ENCODE measurements at regions of chr6 and their contacts with region 1.

Region 1: GRCh38 chr6:6749702-6750491 is 161.4 kb downstream of the LY86 start:
- DNase-seq: peak; percentile 86 to 93 (median 90)
- H3K4me3 ChIP-seq: peak overlapping the region in 2 of 3 experiments; percentile 26 to 69
- H3K4me3 Mint-ChIP-seq: peak overlapping the region; percentile 84 to 90
- H3K27ac ChIP-seq: peak overlapping the region; percentile 89 to 97
- H3K27ac Mint-ChIP-seq: peak overlapping the region; percentile 87 to 99 (median 98)
- H3K4me1 ChIP-seq: peaks cover 57% of the 10 kb centered on the region in 2 donors
- H3K4me1 Mint-ChIP-seq: peaks cover 57% of the 10 kb centered on the region
- H3K27me3 ChIP-seq: no peaks in the 10 kb centered on the region
- H3K27me3 Mint-ChIP-seq: peaks cover 0 to 2% (median 0%) of the 10 kb centered on the region in 3 donors
- CTCF ChIP-seq: no peak

Region 2: GRCh38 chr6:6696867-6697531 is 52.9 kb before region 1 on chr6:
- intact Hi-C with region 1: loop called in 1 of 2 experiments (anchors 10 kb)
- DNase-seq: peak; percentile 66 to 84 (median 81)
- H3K4me3 ChIP-seq: no peak overlapping the region
- H3K4me3 Mint-ChIP-seq: no peak overlapping the region
- H3K27ac ChIP-seq: peak overlapping the region; percentile 1 to 81
- H3K27ac Mint-ChIP-seq: peak overlapping the region; percentile 33 to 91 (median 78)
- H3K4me1 ChIP-seq: peaks cover 74 to 85% of the 10 kb centered on the region in 2 donors
- H3K4me1 Mint-ChIP-seq: peaks cover 78% of the 10 kb centered on the region
- H3K27me3 ChIP-seq: no peaks in the 10 kb centered on the region
- H3K27me3 Mint-ChIP-seq: no peaks in the 10 kb centered on the region
- CTCF ChIP-seq: peak; percentile 80

Region 3: DNA sequence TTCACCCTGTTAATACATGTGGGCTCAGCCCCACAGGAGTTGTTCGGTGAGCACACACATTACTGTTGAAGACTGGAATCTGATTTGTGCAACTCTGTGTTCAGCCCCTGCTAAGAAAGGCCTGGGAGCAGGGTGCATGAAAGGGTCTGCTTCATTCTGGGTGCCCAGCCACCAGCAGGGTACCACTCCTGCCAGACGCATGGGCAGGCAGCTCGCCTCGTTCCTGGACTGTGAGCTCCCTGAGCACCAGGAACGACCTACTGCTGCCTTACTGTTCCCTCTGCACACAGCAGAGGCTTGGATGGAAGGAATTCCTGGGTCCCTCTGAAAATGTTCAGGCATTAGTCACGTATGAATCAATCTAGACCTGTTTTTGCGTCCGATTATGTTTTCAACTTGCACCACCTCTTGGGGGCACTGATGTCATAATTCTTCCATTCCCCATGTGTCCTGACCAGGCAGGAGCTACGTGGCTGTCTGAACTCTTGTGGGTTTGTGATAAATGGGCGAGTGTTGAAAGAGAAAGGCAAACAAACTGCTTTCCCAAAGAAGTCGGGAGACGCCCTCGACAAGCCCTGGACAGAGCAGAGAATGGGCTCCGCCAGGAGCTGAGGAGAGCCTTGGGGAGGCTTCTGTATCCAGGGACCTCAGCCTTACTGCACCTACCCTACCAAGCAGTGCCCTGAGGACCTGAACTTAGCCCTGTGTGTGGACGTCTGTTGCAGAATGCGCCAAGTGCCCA is 37.5 kb before region 1 on chr6:
- intact Hi-C with region 1: loop called in 1 of 2 experiments (anchors 5 kb)
- DNase-seq: peak; percentile 78 to 91 (median 86)
- H3K4me3 ChIP-seq: peak overlapping the region in 1 of 3 experiments; percentile 45
- H3K4me3 Mint-ChIP-seq: peak overlapping the region; percentile 65 to 72
- H3K27ac ChIP-seq: peak overlapping the region; percentile 82 to 97
- H3K27ac Mint-ChIP-seq: peak overlapping the region; percentile 88 to 96 (median 95)
- H3K4me1 ChIP-seq: peaks cover 75 to 83% of the 10 kb centered on the region in 2 donors
- H3K4me1 Mint-ChIP-seq: peaks cover 91% of the 10 kb centered on the region
- H3K27me3 ChIP-seq: no peaks in the 10 kb centered on the region
- H3K27me3 Mint-ChIP-seq: no peaks in the 10 kb centered on the region
- CTCF ChIP-seq: no peak